Caco-2 (cell line): ENCODE measurements at regions of chr3 and their contacts with region 1.

Region 1: DNA sequence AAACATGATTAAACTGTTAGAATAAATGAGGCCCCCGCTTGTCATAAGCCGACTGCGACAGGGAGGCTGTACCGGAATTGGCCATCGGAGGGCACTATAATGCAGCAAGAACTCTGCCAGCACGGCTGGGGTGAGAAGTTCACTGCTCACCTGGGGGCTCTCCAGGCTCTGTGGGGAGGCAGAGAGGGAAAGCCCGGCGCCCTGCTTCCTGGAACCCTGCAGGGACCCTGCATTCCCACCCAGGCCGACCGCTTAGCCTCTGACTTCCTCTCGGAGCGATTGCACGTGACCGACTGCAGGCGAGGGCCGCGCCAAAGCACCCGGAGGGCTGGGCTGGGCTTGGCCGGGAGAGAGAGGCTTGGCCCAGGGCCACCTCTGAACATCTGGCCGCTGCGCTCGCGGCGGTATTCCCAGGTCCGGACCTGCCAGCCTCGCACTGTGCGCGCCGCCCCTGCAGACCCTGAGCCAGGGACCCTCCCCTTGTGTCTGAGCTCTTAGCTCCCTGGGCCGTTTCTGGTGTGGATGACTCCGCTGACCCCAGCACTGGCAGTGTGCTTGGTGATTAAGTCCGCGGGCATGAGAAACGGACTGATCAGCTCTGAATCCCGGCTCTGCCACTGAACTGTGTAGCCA is 26.2 kb downstream of the DRD3 start:
- DNase-seq: peak; percentile 74 to 83
- H3K4me3 ChIP-seq: peak overlapping the region; percentile 56
- H3K4me3 Mint-ChIP-seq: peak overlapping the region; percentile 65
- H3K27ac Mint-ChIP-seq: no peak overlapping the region
- H3K4me1 ChIP-seq: no peaks in the 10 kb centered on the region
- H3K4me1 Mint-ChIP-seq: no peaks in the 10 kb centered on the region
- H3K27me3 ChIP-seq: no peaks in the 10 kb centered on the region
- H3K27me3 Mint-ChIP-seq: peaks cover 23% of the 10 kb centered on the region
- CTCF ChIP-seq: peak; percentile 86 to 88

Region 2: DNA sequence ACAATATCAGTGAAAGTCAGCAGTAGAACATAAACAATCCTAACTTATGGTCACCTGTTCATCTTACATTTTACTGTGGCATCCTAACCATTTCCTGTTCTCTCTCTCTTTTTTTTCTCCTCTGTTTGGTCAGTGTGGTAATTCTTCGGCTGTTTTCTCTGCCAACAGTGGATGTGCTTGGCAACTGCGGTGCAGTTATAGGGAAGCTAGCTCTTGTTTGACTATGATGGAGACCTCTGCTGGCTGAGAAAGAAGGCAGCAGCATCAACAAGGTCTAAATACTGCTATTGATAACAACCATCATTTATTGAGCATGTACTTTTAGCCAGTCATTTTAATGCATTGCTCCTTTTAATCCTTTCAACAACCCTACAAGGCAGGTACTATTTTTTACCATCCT is 26.9 kb after region 1 on chr3:
- CTCF ChIA-PET with region 1: no interaction called
- POLR2A ChIA-PET with region 1: no interaction called
- intact Hi-C with region 1: loop called (anchors 1 kb)
- DNase-seq: peak in 1 of 2 experiments; percentile 12
- H3K4me3 ChIP-seq: no peak overlapping the region
- H3K4me3 Mint-ChIP-seq: no peak overlapping the region
- H3K27ac Mint-ChIP-seq: no peak overlapping the region
- H3K4me1 ChIP-seq: no peaks in the 10 kb centered on the region
- H3K4me1 Mint-ChIP-seq: no peaks in the 10 kb centered on the region
- H3K27me3 ChIP-seq: no peaks in the 10 kb centered on the region
- H3K27me3 Mint-ChIP-seq: peaks cover 11% of the 10 kb centered on the region
- CTCF ChIP-seq: peak; percentile 14 to 35

Region 3: GRCh38 chr3:114299421-114299820 is 146.8 kb after region 1 on chr3:
- CTCF ChIA-PET with region 1: interaction called, 9 read pairs
- POLR2A ChIA-PET with region 1: no interaction called
- intact Hi-C with region 1: loop called (anchors 1 kb)
- DNase-seq: peak; percentile 61 to 64
- H3K4me3 ChIP-seq: no peak overlapping the region
- H3K4me3 Mint-ChIP-seq: peak overlapping the region; percentile 20
- H3K27ac Mint-ChIP-seq: no peak overlapping the region
- H3K4me1 ChIP-seq: no peaks in the 10 kb centered on the region
- H3K4me1 Mint-ChIP-seq: no peaks in the 10 kb centered on the region
- H3K27me3 ChIP-seq: no peaks in the 10 kb centered on the region
- H3K27me3 Mint-ChIP-seq: peaks cover 6% of the 10 kb centered on the region
- CTCF ChIP-seq: peak; percentile 39 to 81

Region 4: DNA sequence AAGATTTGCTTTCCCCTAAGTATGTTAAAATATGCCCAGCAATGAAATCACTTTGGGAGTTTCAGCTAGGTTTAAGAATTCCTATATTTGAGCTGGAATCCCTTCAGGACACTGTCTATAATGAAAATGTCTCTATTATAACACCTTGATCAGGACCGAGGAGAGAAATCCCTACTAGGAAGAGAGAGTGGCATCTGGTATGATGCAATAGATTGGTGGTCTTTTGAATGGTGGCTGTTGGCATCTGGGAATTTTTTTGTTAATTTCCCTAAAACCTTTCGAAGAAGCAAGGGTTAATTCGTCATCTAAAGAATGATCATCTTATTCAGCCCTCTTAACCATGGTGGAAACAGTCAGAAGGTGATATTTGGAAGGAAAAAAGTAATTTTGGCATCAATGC is 184.2 kb after region 1 on chr3:
- CTCF ChIA-PET with region 1: no interaction called
- POLR2A ChIA-PET with region 1: no interaction called
- intact Hi-C with region 1: loop called (anchors 1 kb)
- DNase-seq: no peak
- H3K4me3 ChIP-seq: no peak overlapping the region
- H3K4me3 Mint-ChIP-seq: no peak overlapping the region
- H3K27ac Mint-ChIP-seq: no peak overlapping the region
- H3K4me1 ChIP-seq: no peaks in the 10 kb centered on the region
- H3K4me1 Mint-ChIP-seq: no peaks in the 10 kb centered on the region
- H3K27me3 ChIP-seq: no peaks in the 10 kb centered on the region
- H3K27me3 Mint-ChIP-seq: no peaks in the 10 kb centered on the region
- CTCF ChIP-seq: no peak